Activated CD4-positive, alpha-beta memory T cell treated with anti-CD3 and anti-CD28 coated beads for 36 hours (primary cell): ENCODE measurements at regions of chrX and their contacts with region 1.

Region 1: GRCh38 chrX:48021026-48021900 is 14.5 kb downstream of the SPACA5 start:
- DNase-seq: peak; percentile 79
- H3K4me3 Mint-ChIP-seq: peak overlapping the region; percentile 88
- H3K27ac Mint-ChIP-seq: peak overlapping the region; percentile 95
- H3K4me1 Mint-ChIP-seq: peaks cover 8% of the 10 kb centered on the region
- H3K27me3 Mint-ChIP-seq: no peaks in the 10 kb centered on the region

Region 2: GRCh38 chrX:46849933-46850332 is 1171.3 kb before region 1 on chrX:
- CTCF ChIA-PET with region 1: no interaction called
- POLR2A ChIA-PET with region 1: no interaction called
- intact Hi-C with region 1: no loop called
- DNase-seq: no peak
- H3K4me3 Mint-ChIP-seq: no peak overlapping the region
- H3K27ac Mint-ChIP-seq: no peak overlapping the region
- H3K4me1 Mint-ChIP-seq: peaks cover 9% of the 10 kb centered on the region
- H3K27me3 Mint-ChIP-seq: no peaks in the 10 kb centered on the region

Region 3: GRCh38 chrX:47482512-47483309 is 538.6 kb before region 1 on chrX and contains the start of gene ZNF41:
- CTCF ChIA-PET with region 1: no interaction called
- POLR2A ChIA-PET with region 1: no interaction called
- intact Hi-C with region 1: loop called (anchors 2 kb)
- DNase-seq: peak; percentile 80
- H3K4me3 Mint-ChIP-seq: peak within 1 kb of the TSS; percentile 86
- H3K27ac Mint-ChIP-seq: peak within 1 kb of the TSS; percentile 95
- H3K4me1 Mint-ChIP-seq: peaks cover 29% of the 10 kb centered on the region
- H3K27me3 Mint-ChIP-seq: no peaks in the 10 kb centered on the region
- total RNA-seq, gene ZNF41: 8.4 to 8.7 TPM

Region 4: GRCh38 chrX:47658684-47659515 is 362.4 kb before region 1 on chrX and contains the start of gene UXT:
- CTCF ChIA-PET with region 1: no interaction called
- POLR2A ChIA-PET with region 1: no interaction called
- intact Hi-C with region 1: loop called (anchors 2 kb)
- DNase-seq: peak; percentile 96
- H3K4me3 Mint-ChIP-seq: peak within 1 kb of the TSS; percentile 87
- H3K27ac Mint-ChIP-seq: peak within 1 kb of the TSS; percentile 98
- H3K4me1 Mint-ChIP-seq: peaks cover 48% of the 10 kb centered on the region
- H3K27me3 Mint-ChIP-seq: no peaks in the 10 kb centered on the region
- total RNA-seq, gene UXT: 198 to 210 TPM

Region 5: DNA sequence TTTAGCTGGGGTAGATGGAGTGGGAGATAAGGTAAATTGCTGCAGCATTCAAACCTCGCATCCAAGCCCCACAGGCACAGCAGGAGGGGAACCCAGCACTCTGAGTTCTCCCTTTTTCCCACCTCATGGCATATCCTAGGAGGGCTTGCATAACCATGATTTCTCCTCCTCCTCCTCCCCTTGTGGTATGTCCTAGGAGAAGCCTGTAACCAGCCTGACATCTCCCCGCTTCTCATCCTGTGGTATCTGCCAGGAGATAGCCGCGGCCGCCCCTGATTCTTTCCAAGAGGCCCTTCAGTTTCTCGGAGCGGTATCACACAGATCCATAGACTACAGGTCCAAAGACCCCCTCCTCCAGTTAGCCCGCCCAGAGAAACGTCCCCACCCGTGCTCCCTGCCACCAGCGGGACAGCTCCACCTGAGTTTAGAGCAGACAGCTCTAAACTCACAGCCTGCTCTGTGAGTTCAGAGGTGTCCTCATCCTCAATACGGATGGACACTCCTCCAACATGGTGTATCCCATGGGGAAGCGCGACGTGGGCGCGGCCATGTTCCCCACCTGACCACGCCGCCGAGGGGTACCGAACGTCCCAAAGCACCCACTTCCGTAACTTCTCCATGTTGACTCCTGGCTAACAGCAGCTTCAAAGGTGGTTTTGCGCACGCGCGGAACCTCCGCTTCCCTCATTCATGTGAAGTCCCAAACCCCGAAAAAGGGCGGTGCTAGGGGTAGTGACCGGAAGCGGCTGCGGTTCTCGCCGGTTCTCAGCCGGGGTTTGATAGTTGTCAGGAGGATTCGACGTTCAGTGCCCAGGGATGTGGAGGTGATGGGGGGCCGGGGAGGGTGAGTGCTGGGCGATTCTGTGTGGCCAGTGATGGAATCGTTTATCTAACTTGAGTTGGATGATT is 184.8 kb before region 1 on chrX and contains the start of gene ZNF81:
- CTCF ChIA-PET with region 1: interaction called, 13 read pairs
- POLR2A ChIA-PET with region 1: interaction called, 3 read pairs
- intact Hi-C with region 1: loop called (anchors 1 kb)
- DNase-seq: peak; percentile 95
- H3K4me3 Mint-ChIP-seq: peak within 1 kb of the TSS; percentile 97
- H3K27ac Mint-ChIP-seq: peak within 1 kb of the TSS; percentile 97
- H3K4me1 Mint-ChIP-seq: peaks cover 19% of the 10 kb centered on the region
- H3K27me3 Mint-ChIP-seq: no peaks in the 10 kb centered on the region
- total RNA-seq, gene ZNF81: 6.0 to 7.2 TPM

Region 6: GRCh38 chrX:47854474-47854873 is 166.8 kb before region 1 on chrX:
- CTCF ChIA-PET with region 1: interaction called, 12 read pairs
- POLR2A ChIA-PET with region 1: no interaction called
- intact Hi-C with region 1: loop called (anchors 5 kb)
- DNase-seq: peak; percentile 22
- H3K4me3 Mint-ChIP-seq: no peak overlapping the region
- H3K27ac Mint-ChIP-seq: no peak overlapping the region
- H3K4me1 Mint-ChIP-seq: no peaks in the 10 kb centered on the region
- H3K27me3 Mint-ChIP-seq: no peaks in the 10 kb centered on the region

Region 7: DNA sequence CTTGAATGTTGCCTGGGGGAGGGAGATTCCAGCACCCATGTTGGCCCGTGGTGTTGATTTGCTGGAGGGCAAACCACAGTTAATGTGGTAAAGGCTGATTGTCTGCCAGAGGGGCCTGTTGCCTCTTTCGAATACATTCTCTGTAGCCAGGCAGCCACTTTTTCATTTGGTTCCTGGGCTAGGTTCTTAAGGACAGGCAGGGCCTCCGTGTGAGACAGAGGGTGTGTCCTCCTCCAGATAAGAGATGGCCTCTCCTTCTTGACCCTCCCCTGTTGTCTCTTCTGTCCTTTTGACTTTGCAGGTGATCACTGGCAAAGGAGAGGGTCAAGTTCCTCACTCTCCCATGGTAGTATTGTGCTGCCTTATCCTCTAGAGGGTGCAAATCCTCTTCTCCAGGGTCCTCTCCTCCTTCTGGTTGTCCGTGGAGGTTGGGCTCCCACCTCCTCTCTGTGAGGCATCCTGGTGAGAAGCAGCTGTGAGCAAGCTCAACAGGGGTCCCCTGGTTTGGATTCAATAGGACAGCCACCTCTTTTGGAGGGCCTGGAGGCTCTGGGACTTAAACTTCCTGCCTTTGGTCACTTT is 62.4 kb before region 1 on chrX:
- CTCF ChIA-PET with region 1: interaction called, 24 read pairs
- POLR2A ChIA-PET with region 1: no interaction called
- intact Hi-C with region 1: loop called (anchors 1 kb)
- DNase-seq: peak; percentile 17
- H3K4me3 Mint-ChIP-seq: no peak overlapping the region
- H3K27ac Mint-ChIP-seq: no peak overlapping the region
- H3K4me1 Mint-ChIP-seq: no peaks in the 10 kb centered on the region
- H3K27me3 Mint-ChIP-seq: no peaks in the 10 kb centered on the region

Region 8: DNA sequence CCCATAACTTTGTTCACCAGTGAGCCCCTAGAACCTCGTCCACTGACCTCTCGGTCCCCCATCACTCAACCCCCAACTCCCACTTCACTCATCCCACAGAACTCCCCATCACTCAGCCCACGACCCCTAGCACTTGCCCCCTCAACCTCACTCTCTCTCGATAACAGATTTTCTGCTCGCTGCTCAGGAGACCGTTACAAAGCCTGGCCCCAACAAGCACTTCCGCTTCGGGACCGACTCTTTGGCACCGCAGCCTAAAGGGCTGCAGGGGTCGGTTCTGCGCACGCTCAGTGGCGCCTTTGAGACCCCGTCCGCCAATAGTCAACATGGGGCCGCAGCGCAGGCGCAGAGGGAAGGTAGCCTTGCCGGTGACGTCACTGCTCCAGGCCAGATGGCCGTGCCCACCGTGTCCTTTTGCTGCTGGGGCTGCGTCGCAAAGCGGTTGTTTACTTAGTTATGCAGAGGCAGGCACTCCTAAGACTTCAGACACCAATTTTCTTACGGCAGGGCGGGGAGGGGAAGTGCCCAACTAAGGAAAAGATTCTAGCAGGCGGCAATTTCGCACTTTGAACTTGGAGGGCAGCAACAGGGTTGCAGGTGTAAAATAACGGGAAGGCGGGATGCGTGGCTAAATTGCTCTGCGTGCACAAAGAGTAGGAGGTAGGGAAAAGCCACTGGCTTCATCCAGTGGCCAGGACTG is 17.4 kb before region 1 on chrX and contains the start of gene ZNF182:
- CTCF ChIA-PET with region 1: no interaction called
- POLR2A ChIA-PET with region 1: no interaction called
- intact Hi-C with region 1: no loop called
- DNase-seq: peak; percentile 94
- H3K4me3 Mint-ChIP-seq: peak within 1 kb of the TSS; percentile 87
- H3K27ac Mint-ChIP-seq: peak within 1 kb of the TSS; percentile 96
- H3K4me1 Mint-ChIP-seq: peaks cover 21% of the 10 kb centered on the region
- H3K27me3 Mint-ChIP-seq: no peaks in the 10 kb centered on the region
- total RNA-seq, gene ZNF182: 6.5 to 7.1 TPM